GM10248 (cell line): ENCODE measurements at regions of chrX and their contacts with region 1.

Region 1: DNA sequence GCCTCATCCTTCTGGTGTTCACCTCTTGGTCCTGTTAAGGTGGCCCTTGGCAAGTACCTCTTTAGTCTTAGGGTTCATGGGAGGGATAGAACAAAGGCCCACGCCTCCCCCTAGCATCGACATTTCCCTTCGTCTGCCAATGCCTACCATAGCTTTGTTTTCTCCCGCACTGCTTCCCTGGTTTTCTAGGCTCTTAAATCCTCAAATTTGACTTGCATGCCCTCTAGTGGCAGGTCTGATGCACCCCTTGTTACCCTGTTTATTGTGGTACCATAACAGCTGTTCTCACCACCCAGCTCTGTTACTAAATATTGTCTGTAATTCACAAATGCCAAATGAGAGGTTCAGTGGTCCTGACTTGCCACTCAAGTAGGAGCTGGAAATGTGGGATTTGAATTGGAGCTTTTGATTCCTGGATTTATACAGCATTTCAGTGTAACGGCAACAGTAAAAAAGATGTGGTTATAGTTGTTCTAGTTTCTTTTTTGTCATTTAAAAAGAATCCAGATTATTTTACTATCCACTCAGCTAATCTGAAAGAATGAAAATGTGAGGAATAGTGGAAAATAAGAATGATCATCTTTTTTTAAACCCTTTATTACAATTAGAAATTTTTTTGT is 100.1 kb downstream of the REPS2 start:
- DNase-seq: peak; percentile 43
- CTCF ChIP-seq: peak; percentile 68

Region 2: GRCh38 chrX:16826207-16826606 is 220.4 kb before region 1 on chrX:
- CTCF ChIA-PET with region 1: interaction called, 26 read pairs
- POLR2A ChIA-PET with region 1: no interaction called
- DNase-seq: peak; percentile 39
- CTCF ChIP-seq: no peak

Region 3: DNA sequence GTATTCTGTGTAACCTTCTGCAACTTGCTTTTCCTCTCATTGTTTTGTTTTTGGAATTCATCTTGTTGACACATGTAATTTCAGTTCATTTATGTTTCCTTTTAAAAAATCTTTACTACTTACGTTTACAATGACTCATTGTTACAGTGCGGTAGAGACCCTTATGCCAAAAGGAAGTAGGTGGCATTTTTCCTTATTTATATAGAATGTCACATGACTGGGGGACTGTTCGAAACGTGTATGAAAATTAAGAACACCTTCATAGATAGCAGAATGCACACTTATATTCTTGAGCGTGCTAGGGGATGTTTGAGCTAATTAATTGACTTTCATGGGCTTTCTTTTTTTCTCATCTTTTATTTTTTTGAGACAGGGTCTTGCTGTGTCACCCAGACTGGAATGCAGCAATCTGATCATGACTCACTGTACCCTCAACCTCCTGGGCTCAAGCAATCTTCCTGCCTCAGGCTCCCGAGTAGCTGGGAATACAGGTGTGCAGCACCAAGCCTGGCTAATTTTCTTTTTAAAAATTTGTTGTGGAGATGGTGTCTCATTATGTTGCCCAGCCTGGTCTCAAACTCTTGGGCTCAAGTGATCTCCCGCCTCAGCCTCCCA is 92.9 kb before region 1 on chrX:
- CTCF ChIA-PET with region 1: no interaction called
- POLR2A ChIA-PET with region 1: no interaction called
- DNase-seq: no peak
- CTCF ChIP-seq: no peak

Region 4: GRCh38 chrX:17036172-17036961 is 10.2 kb before region 1 on chrX:
- CTCF ChIA-PET with region 1: interaction called, 18 read pairs
- POLR2A ChIA-PET with region 1: no interaction called
- DNase-seq: no peak
- CTCF ChIP-seq: no peak